Activated CD8-positive, alpha-beta T cell treated with anti-CD3 and anti-CD28 coated beads for 36 hours (primary cell): ENCODE measurements at regions of chr9 and their contacts with region 1.

Region 1: DNA sequence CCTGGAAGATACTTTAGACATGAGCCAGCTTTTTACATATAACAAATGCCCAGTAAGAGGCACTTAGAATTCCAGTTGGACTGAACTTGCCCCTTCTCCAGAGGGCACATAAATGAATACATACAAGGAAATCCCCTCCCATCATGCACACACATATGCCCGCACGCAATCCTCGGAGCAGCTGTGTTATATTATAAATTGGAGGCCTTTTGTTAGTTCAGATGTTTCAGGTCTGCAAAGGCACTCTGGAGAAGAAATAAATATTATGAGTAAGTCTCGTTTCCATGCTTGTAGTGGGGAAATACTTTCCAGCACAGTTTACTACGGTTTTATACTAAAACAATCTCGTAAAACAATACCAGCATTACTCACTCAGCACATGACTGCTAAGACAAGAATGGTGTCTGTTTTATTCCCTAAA is 17.6 kb upstream of the MUSK start:
- DNase-seq: no peak
- ATAC-seq: no peak
- H3K4me3 Mint-ChIP-seq: no peak overlapping the region
- H3K27ac Mint-ChIP-seq: no peak overlapping the region
- H3K4me1 Mint-ChIP-seq: no peaks in the 10 kb centered on the region
- H3K27me3 Mint-ChIP-seq: no peaks in the 10 kb centered on the region
- CTCF ChIP-seq: no peak

Region 2: GRCh38 chr9:110579034-110579861 is 71.8 kb before region 1 on chr9 and contains the start of gene SVEP1:
- CTCF ChIA-PET with region 1: no interaction called
- POLR2A ChIA-PET with region 1: no interaction called
- intact Hi-C with region 1: no loop called
- DNase-seq: no peak
- ATAC-seq: no peak
- H3K4me3 Mint-ChIP-seq: no peak within 1 kb of the TSS
- H3K27ac Mint-ChIP-seq: no peak within 1 kb of the TSS
- H3K4me1 Mint-ChIP-seq: peaks cover 2% of the 10 kb centered on the region
- H3K27me3 Mint-ChIP-seq: peaks cover 34% of the 10 kb centered on the region
- CTCF ChIP-seq: no peak
- total RNA-seq, gene SVEP1: not detected

Region 3: DNA sequence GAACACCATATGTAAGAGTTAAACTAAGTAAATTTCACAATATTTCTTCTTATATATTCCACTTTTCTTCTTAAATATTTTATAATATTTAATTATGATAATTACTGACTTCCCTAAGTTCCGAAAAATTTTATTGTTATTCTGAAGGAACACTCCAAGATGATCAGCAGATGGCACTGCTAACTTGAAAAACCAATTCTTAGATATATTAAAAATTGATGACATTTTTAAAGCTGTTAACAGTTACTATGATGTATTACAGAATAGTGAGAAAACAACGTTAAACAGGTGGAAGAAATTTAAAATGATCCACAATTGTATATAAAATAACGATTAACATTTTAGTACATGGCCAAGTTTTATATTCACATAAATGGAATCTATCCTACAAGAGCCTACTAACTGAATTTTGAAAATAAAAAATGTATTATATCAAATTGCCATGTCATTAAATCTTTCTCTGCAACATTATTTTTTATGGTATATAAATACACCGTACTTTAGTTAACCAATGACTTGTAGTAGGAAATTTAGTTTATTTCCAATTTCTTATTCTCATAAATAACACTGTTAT is 12.5 kb before region 1 on chr9:
- CTCF ChIA-PET with region 1: no interaction called
- POLR2A ChIA-PET with region 1: no interaction called
- intact Hi-C with region 1: no loop called
- DNase-seq: no peak
- ATAC-seq: no peak
- H3K4me3 Mint-ChIP-seq: no peak overlapping the region
- H3K27ac Mint-ChIP-seq: no peak overlapping the region
- H3K4me1 Mint-ChIP-seq: no peaks in the 10 kb centered on the region
- H3K27me3 Mint-ChIP-seq: no peaks in the 10 kb centered on the region
- CTCF ChIP-seq: no peak

Region 4: GRCh38 chr9:110714314-110714713 is 63.3 kb after region 1 on chr9:
- CTCF ChIA-PET with region 1: no interaction called
- POLR2A ChIA-PET with region 1: no interaction called
- intact Hi-C with region 1: loop called (anchors 10 kb)
- DNase-seq: no peak
- ATAC-seq: no peak
- H3K4me3 Mint-ChIP-seq: no peak overlapping the region
- H3K27ac Mint-ChIP-seq: no peak overlapping the region
- H3K4me1 Mint-ChIP-seq: no peaks in the 10 kb centered on the region
- H3K27me3 Mint-ChIP-seq: peaks cover 2% of the 10 kb centered on the region
- CTCF ChIP-seq: no peak